ENCODE measurements at regions of chr7 and their contacts with region 1.

Region 1: DNA sequence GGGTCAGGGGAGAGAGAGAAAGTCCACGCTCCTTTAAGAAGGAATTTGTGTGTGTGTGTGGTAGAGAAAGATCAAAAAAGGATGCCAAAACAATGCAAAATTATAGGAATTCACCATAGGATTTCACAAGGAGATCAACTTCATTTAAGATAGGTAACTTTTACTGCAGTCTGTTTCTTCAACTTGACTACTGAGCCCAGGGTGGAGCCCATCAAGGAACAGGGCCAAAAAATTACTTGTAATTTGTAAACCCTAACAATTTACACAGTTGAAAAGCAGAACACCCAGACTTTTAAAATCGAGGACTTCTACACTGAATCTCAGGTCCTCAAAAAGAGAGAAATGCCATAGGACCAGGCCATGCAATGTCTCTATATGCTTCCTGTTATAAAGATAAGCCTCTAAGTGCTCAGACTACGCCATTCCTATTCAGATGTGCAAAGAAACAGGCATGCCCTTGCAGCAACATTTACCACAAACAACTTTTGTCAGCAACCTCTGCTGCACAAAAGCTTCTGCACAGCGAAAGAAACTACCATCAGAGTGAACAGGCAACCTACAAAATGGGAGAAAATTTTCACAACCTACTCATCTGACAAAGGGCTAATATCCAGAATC is 10.6 kb upstream of the GIMAP4 start:
- DNase-seq: peak in 5 of 10 donors; percentile 41 to 76 (median 68)
- ATAC-seq: peak; percentile 96 to 97
- H3K4me3 Mint-ChIP-seq: peak overlapping the region; percentile 48 to 87 (median 82)
- H3K27ac Mint-ChIP-seq: peak overlapping the region; percentile 84 to 99 (median 96)
- H3K4me1 Mint-ChIP-seq: peaks cover 43 to 87% (median 86%) of the 10 kb centered on the region in 4 donors
- H3K27me3 Mint-ChIP-seq: no peaks in the 10 kb centered on the region

Region 2: GRCh38 chr7:150538259-150538658 is 18.4 kb before region 1 on chr7:
- POLR2A ChIA-PET with region 1: interaction called, 42 read pairs
- DNase-seq: no peak
- ATAC-seq: no peak
- H3K4me3 Mint-ChIP-seq: no peak overlapping the region
- H3K27ac Mint-ChIP-seq: no peak overlapping the region
- H3K4me1 Mint-ChIP-seq: peaks cover 4 to 32% (median 15%) of the 10 kb centered on the region in 4 donors
- H3K27me3 Mint-ChIP-seq: no peaks in the 10 kb centered on the region